SK-N-SH (cell line): ENCODE measurements at regions of chr13 and their contacts with region 1.

Region 1: DNA sequence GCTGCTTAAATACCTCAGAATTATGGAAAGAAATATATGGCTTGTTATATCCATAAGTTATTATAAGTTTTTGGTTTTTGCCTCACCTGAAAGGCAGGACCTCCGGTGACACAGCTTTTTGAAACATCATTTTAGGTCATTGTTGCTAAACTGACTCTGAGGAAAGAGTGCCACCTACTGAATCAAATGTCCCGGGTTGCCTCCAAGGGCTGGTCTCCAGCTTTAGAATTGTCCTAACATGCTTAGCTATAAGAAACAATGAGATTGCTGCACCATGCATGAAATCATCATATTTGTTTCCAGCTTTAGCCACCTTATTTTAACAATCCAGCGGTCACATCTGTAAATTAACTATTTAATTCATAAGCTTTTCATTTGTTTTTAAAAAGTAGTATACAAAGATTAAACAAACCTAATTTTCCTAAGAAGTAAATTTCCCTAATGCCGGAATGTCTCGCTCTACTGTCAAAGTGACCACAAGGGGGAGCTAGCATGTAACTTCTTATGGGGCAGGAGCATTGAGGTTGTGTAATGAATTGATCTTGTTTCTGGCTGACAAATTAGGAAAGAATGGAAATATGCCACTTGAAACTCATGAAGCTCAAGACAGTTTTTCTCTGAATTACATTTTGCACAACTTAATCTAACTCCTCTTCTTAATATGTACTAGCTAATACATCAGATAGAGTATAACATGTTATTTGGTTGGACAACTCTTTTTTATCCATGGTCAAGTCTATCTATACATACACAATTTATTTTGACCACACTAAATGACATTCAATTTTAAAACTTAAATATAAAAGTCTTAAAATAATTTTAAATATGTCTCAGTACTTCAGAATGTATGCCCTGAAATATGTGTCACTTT is 6.7 kb upstream of the PCDH17 start:
- DNase-seq: peak; percentile 44
- H3K4me3 ChIP-seq: peak overlapping the region in 1 of 2 experiments; percentile 38; a peak in 1 of 4 replicates
- H3K27ac ChIP-seq: no peak overlapping the region
- H3K4me1 ChIP-seq: peaks cover 0 to 3% of the 10 kb centered on the region in 2 experiments; a peak in 1 of 4 replicates
- H3K27me3 ChIP-seq: 0 out of 2 replicates have a peak, but pooled peaks cover 7% of the 10 kb centered on the region
- CTCF ChIP-seq: peak; percentile 95
- EP300 ChIP-seq: no peak
- RAD21 ChIP-seq: peak; percentile 73

Region 2: DNA sequence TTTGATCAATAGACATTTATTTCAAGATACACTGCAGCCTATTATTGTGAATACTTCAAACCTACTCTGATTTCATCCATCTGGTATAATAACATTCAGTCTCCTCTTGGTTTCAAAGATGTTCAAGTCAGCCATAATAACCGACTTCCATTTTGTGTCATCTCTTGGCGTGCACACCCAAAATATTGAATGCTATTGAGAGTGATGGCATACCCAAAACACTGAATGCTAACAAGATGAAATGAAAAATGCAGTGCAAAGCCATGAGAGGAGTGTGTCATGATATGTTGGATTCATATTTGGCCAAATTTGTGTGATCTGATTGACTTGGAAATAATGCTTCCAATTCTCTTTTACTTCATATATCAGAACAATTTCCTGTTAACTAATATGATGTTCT is 174.4 kb before region 1 on chr13:
- CTCF ChIA-PET with region 1: no interaction called
- POLR2A ChIA-PET with region 1: no interaction called
- DNase-seq: no peak
- H3K4me3 ChIP-seq: no peak overlapping the region
- H3K27ac ChIP-seq: no peak overlapping the region
- H3K4me1 ChIP-seq: no peaks in the 10 kb centered on the region
- H3K27me3 ChIP-seq: no peaks in the 10 kb centered on the region
- CTCF ChIP-seq: no peak
- EP300 ChIP-seq: no peak
- RAD21 ChIP-seq: no peak

Region 3: GRCh38 chr13:57491293-57491692 is 133.5 kb before region 1 on chr13:
- CTCF ChIA-PET with region 1: no interaction called
- POLR2A ChIA-PET with region 1: no interaction called
- DNase-seq: no peak
- H3K4me3 ChIP-seq: no peak overlapping the region
- H3K27ac ChIP-seq: no peak overlapping the region
- H3K4me1 ChIP-seq: no peaks in the 10 kb centered on the region
- H3K27me3 ChIP-seq: no peaks in the 10 kb centered on the region
- CTCF ChIP-seq: no peak
- EP300 ChIP-seq: no peak
- RAD21 ChIP-seq: no peak

Region 4: GRCh38 chr13:57612568-57612967 is 12.2 kb before region 1 on chr13:
- CTCF ChIA-PET with region 1: interaction called, 22 read pairs
- POLR2A ChIA-PET with region 1: no interaction called
- DNase-seq: no peak
- H3K4me3 ChIP-seq: no peak overlapping the region
- H3K27ac ChIP-seq: no peak overlapping the region
- H3K4me1 ChIP-seq: no peaks in the 10 kb centered on the region
- H3K27me3 ChIP-seq: no peaks in the 10 kb centered on the region
- CTCF ChIP-seq: no peak
- EP300 ChIP-seq: no peak
- RAD21 ChIP-seq: no peak

Region 5: DNA sequence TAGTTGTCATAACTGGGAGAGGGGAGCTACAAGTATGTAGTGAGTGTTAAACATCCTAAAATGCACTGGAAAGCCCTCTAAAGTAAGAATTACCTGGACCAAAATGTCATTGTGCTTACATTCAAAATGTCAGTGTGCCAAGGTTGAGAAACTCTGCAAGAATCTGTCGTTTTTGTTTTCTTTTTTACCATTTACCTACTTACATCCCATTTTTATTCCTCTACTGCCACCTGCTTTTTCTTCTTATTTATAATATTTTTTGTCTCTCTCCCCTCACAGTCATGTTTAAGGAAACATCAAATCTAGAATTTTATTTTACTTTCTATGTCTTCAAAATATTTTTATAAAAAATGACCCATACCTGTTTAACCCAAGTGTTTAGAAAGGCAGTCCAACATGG is 233.1 kb after region 1 on chr13:
- CTCF ChIA-PET with region 1: interaction called, 20 read pairs
- POLR2A ChIA-PET with region 1: no interaction called
- DNase-seq: no peak
- H3K4me3 ChIP-seq: no peak overlapping the region
- H3K27ac ChIP-seq: no peak overlapping the region
- H3K4me1 ChIP-seq: no peaks in the 10 kb centered on the region
- H3K27me3 ChIP-seq: no peaks in the 10 kb centered on the region
- CTCF ChIP-seq: no peak
- EP300 ChIP-seq: no peak
- RAD21 ChIP-seq: peak; percentile 49

Region 6: DNA sequence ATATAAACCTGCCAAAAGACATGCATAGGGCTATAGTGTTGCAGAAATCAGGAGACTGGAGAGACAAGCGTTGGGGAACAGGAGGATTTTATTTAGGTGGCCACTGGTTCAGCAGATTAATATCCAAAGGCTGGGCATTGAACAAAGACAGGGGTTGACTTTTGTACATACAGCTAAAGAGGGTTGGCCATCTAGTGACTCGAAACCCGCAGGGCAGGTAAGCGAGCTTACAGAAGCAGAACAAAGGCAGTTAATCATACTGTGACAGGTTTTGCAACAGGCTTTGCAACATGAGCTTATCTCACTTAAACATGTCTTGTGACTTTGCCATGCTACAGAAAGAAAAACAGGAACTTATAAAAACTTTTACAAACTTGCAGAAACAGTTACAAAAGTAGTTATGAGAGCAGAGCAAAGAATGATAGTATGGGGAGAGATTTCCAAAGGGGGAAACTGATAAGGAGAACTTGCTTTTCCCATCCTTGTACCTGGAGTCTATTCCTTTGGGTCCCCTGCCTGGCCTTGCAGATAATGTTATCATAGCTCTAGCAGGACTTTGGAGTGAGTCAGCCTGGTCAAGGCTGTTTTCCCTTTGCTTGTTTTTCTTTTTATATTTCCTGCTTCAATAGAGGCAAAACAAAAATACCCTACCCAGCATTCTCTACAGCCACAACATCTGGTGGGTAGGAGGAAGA is 240.9 kb after region 1 on chr13:
- CTCF ChIA-PET with region 1: interaction called, 10 read pairs
- POLR2A ChIA-PET with region 1: no interaction called
- DNase-seq: no peak
- H3K4me3 ChIP-seq: no peak overlapping the region
- H3K27ac ChIP-seq: no peak overlapping the region
- H3K4me1 ChIP-seq: no peaks in the 10 kb centered on the region
- H3K27me3 ChIP-seq: no peaks in the 10 kb centered on the region
- CTCF ChIP-seq: no peak
- EP300 ChIP-seq: no peak
- RAD21 ChIP-seq: no peak

Region 7: GRCh38 chr13:58542530-58542929 is 917.7 kb after region 1 on chr13:
- CTCF ChIA-PET with region 1: no interaction called
- POLR2A ChIA-PET with region 1: no interaction called
- DNase-seq: no peak
- H3K4me3 ChIP-seq: no peak overlapping the region
- H3K27ac ChIP-seq: no peak overlapping the region
- H3K4me1 ChIP-seq: peaks cover 0 to 2% of the 10 kb centered on the region in 2 experiments; a peak in 1 of 4 replicates
- H3K27me3 ChIP-seq: no peaks in the 10 kb centered on the region
- CTCF ChIP-seq: no peak
- EP300 ChIP-seq: no peak
- RAD21 ChIP-seq: no peak

Region 8: DNA sequence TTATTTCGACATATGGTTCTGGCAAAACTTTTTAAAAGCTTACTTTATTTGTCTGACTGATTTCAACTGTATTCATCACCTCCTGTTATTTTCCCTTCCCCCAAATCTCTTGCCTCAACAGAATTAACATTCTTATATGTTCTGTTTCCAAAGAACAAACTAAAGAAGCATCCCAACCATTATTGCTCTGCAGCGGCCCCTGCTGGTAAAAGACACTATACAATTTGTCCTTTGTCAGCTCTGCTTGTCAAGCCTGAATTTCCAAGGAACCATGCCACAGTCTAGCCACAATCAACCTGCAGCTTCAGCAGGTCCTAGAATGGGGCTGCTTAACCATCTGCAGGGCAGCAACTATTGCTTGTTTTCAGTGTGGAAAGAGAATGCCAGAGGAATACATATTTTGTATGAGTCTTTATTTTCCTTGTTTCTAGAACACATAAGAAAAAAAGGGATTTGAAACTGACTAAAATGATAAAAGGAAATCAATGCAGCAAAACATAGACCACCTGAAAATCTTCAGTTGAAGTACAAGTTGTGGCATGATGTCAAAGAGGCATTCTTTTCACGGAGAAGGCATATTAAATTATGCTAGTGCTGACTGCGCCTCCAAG is 1693.6 kb after region 1 on chr13:
- CTCF ChIA-PET with region 1: interaction called, 21 read pairs
- POLR2A ChIA-PET with region 1: no interaction called
- DNase-seq: peak; percentile 44
- H3K4me3 ChIP-seq: no peak overlapping the region; a peak in 1 of 4 replicates
- H3K27ac ChIP-seq: peak overlapping the region in 1 of 2 experiments; percentile 34; a peak in 2 of 4 replicates
- H3K4me1 ChIP-seq: peaks cover 0 to 4% of the 10 kb centered on the region in 2 experiments; a peak in 3 of 4 replicates
- H3K27me3 ChIP-seq: no peaks in the 10 kb centered on the region
- CTCF ChIP-seq: peak; percentile 89
- EP300 ChIP-seq: no peak
- RAD21 ChIP-seq: peak; percentile 86